Endothelial cell of umbilical vein (primary cell): ENCODE measurements at regions of chr19 and their contacts with region 1.

Region 1: DNA sequence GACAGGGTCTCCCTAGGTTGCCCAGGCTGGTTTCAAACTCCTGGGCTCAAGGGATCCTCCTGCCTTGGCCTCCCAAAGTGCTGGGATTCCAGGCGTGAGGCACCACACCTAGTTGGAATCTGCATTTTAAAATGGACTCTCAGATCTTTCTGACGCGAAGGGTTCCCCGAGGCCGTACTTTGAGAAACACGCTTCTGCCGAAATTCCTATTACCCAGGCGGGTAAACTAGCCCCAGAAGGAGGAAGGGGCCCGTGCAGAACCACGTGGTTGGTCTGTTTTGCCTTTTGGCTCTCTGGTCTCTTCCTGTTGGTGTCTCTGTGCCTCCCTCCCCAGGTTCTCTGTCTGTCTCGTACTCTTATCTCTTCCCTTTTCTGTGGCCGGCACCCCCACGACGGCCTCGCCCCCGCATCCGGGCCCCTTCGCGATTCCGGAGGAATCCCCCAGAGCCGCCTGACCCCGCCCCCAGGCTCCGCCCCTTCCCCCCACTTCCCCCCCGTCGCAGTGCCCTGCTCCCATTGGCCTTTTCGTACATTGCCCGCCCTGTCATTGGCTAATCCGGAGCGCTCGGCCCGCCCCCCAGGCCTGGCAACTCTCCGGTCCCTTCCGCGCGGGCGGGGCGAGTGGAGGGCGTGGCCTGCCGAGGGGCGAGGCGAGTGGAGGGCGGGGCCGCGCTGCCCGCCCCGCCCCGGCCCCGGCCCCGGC is at the start of gene TNFAIP8L1:
- DNase-seq: peak; percentile 94
- H3K4me3 ChIP-seq: peak within 1 kb of the TSS; percentile 68 to 79 (median 69)
- H3K27ac ChIP-seq: peak within 1 kb of the TSS; percentile 48
- H3K4me1 ChIP-seq: peaks cover 41% of the 10 kb centered on the region
- H3K27me3 ChIP-seq: no peaks in the 10 kb centered on the region
- CTCF ChIP-seq: no peak
- POLR2A ChIP-seq: no peak
- total RNA-seq, gene TNFAIP8L1: 53.7 and 56.1 TPM in 2 replicates

Region 2: GRCh38 chr19:4400135-4400936 is 238.6 kb before region 1 on chr19 and contains the start of gene SH3GL1:
- CTCF ChIA-PET with region 1: no interaction called
- POLR2A ChIA-PET with region 1: no interaction called
- dilution Hi-C with region 1: no loop called
- intact Hi-C with region 1: loop called (anchors 5 kb)
- DNase-seq: peak; percentile 88
- H3K4me3 ChIP-seq: peak within 1 kb of the TSS; percentile 76 to 98 (median 91)
- H3K27ac ChIP-seq: peak within 1 kb of the TSS; percentile 95
- H3K4me1 ChIP-seq: peaks cover 28% of the 10 kb centered on the region
- H3K27me3 ChIP-seq: no peaks in the 10 kb centered on the region
- CTCF ChIP-seq: peak; percentile 95 to 99
- POLR2A ChIP-seq: peak; percentile 39
- total RNA-seq, gene SH3GL1: 143 and 153 TPM in 2 replicates

Region 3: GRCh38 chr19:4518345-4519171 is 120.4 kb before region 1 on chr19 and contains the start of gene PLIN4:
- CTCF ChIA-PET with region 1: interaction called, 65 read pairs
- POLR2A ChIA-PET with region 1: interaction called, 3 read pairs
- dilution Hi-C with region 1: no loop called
- intact Hi-C with region 1: loop called (anchors 1 kb)
- DNase-seq: no peak
- H3K4me3 ChIP-seq: no peak within 1 kb of the TSS
- H3K27ac ChIP-seq: no peak within 1 kb of the TSS
- H3K4me1 ChIP-seq: no peaks in the 10 kb centered on the region
- H3K27me3 ChIP-seq: no peaks in the 10 kb centered on the region
- CTCF ChIP-seq: no peak
- POLR2A ChIP-seq: no peak
- total RNA-seq, gene PLIN4: not detected in 2 replicates

Region 4: GRCh38 chr19:4557971-4558941 is 80.7 kb before region 1 on chr19:
- CTCF ChIA-PET with region 1: interaction called, 42 read pairs
- POLR2A ChIA-PET with region 1: no interaction called
- dilution Hi-C with region 1: no loop called
- intact Hi-C with region 1: loop called (anchors 1 kb)
- DNase-seq: peak; percentile 61
- H3K4me3 ChIP-seq: peak overlapping the region in 2 of 3 experiments; percentile 37 to 76
- H3K27ac ChIP-seq: peak overlapping the region; percentile 77
- H3K4me1 ChIP-seq: peaks cover 26% of the 10 kb centered on the region
- H3K27me3 ChIP-seq: no peaks in the 10 kb centered on the region
- CTCF ChIP-seq: peak; percentile 91 to 93
- POLR2A ChIP-seq: no peak

Region 5: DNA sequence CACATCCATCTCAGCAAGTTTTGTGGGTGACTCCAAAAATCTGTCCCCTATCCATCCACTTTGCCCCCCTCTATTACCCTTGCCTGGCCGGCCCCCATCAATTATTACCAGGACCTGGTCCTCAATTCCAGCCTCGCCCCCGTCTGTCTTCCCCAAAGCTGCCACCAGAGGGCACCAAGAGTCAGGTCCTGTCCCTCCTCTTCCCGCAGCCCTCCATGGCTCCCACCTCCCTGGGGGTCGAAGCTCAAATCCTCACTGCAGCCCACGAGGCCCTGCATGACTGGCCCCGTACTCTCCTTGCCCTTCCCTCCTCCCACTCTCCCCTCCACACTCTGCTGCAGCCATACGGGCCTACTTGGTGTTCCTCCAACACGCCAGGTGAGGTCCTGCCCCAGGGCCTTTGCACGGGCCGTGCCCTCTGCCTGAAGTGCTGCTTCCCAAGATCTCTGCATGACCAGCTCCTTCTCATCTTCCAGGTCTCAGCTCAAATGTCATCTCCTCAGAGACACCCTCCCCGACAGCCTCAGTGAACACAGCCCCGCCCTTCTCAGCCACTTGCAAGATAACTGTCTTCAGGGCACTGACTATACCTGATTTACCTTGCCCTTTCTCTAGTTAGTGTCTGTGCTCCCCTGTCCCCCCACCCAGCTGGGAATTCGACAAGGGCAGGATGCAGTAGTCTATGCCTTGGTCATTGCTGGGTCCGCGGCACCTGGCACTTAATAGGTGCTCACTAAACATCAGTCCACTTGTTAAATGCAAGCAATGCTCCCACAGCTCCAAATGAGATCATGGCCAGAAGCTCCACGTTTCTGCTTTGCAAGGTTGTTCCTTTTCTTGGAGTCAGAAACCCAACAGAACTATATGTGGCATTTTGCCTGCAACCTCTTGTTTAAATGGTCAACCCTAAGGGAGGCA is 62.7 kb before region 1 on chr19:
- CTCF ChIA-PET with region 1: interaction called, 75 read pairs
- POLR2A ChIA-PET with region 1: interaction called, 5 read pairs
- dilution Hi-C with region 1: no loop called
- intact Hi-C with region 1: loop called (anchors 1 kb)
- DNase-seq: peak; percentile 72
- H3K4me3 ChIP-seq: no peak overlapping the region
- H3K27ac ChIP-seq: peak overlapping the region; percentile 99
- H3K4me1 ChIP-seq: peaks cover 24% of the 10 kb centered on the region
- H3K27me3 ChIP-seq: no peaks in the 10 kb centered on the region
- CTCF ChIP-seq: peak; percentile 82
- POLR2A ChIP-seq: no peak

Region 6: GRCh38 chr19:4723367-4724187 is 84.6 kb after region 1 on chr19 and contains the start of gene DPP9:
- CTCF ChIA-PET with region 1: no interaction called
- POLR2A ChIA-PET with region 1: no interaction called
- dilution Hi-C with region 1: no loop called
- intact Hi-C with region 1: loop called (anchors 1 kb)
- DNase-seq: peak; percentile 98
- H3K4me3 ChIP-seq: peak within 1 kb of the TSS; percentile 49 to 88 (median 54)
- H3K27ac ChIP-seq: peak within 1 kb of the TSS; percentile 62
- H3K4me1 ChIP-seq: peaks cover 15% of the 10 kb centered on the region
- H3K27me3 ChIP-seq: no peaks in the 10 kb centered on the region
- CTCF ChIP-seq: peak in 1 of 2 donors; percentile 4
- POLR2A ChIP-seq: peak; percentile 61
- total RNA-seq, gene DPP9: 87.6 and 98.0 TPM in 2 replicates

Region 7: DNA sequence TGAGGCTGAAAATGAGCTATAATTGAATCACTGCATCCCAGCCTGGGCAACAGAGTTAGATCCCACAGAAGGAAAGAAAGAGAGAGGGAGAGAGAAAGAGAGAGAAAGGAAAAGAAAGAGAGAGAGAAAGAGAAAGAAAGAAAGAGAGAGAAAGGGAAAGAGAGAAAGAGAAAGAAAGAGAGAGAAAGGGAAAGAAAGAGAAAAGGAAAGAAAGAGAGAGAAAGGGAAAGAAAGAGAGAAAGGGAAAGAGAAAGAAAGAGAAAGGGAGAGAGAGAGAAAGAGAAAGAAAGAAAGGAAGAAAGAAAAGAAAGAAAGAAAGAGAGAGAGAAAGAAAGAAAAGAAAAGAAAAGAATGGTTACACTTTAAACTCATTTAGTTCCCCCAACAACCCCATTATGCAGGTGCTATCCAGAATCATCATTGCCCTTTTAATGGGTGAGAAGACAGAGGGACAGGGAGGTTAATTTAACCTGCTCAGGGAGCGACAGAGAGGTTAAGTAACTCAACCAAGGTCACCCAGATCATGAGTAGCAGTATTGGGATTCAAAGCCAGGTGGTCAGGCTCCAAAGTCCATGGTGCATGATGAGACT is 94.9 kb after region 1 on chr19:
- CTCF ChIA-PET with region 1: no interaction called
- POLR2A ChIA-PET with region 1: no interaction called
- dilution Hi-C with region 1: no loop called
- intact Hi-C with region 1: no loop called
- DNase-seq: no peak
- H3K4me3 ChIP-seq: no peak overlapping the region
- H3K27ac ChIP-seq: no peak overlapping the region
- H3K4me1 ChIP-seq: no peaks in the 10 kb centered on the region
- H3K27me3 ChIP-seq: peaks cover 0 to 2% of the 10 kb centered on the region in 2 experiments
- CTCF ChIP-seq: no peak
- POLR2A ChIP-seq: no peak